CD4-positive, alpha-beta T cell (primary cell): ENCODE measurements at regions of chr3 and their contacts with region 1.

Region 1: GRCh38 chr3:153350420-153350819 is 188.4 kb downstream of the RAP2B start:
- DNase-seq: no peak
- ATAC-seq: no peak
- H3K4me3 ChIP-seq: no peak overlapping the region
- H3K4me3 Mint-ChIP-seq: no peak overlapping the region
- H3K27ac ChIP-seq: no peak overlapping the region
- H3K27ac Mint-ChIP-seq: no peak overlapping the region
- H3K4me1 ChIP-seq: no peaks in the 10 kb centered on the region
- H3K4me1 Mint-ChIP-seq: no peaks in the 10 kb centered on the region
- H3K27me3 ChIP-seq: no peaks in the 10 kb centered on the region
- H3K27me3 Mint-ChIP-seq: no peaks in the 10 kb centered on the region
- CTCF ChIP-seq: no peak

Region 2: GRCh38 chr3:152909180-152909883 is 441.1 kb before region 1 on chr3:
- CTCF ChIA-PET with region 1: no interaction called
- POLR2A ChIA-PET with region 1: no interaction called
- intact Hi-C with region 1: no loop called
- DNase-seq: no peak
- ATAC-seq: no peak
- H3K4me3 ChIP-seq: no peak overlapping the region
- H3K4me3 Mint-ChIP-seq: no peak overlapping the region
- H3K27ac ChIP-seq: no peak overlapping the region
- H3K27ac Mint-ChIP-seq: no peak overlapping the region
- H3K4me1 ChIP-seq: no peaks in the 10 kb centered on the region
- H3K4me1 Mint-ChIP-seq: no peaks in the 10 kb centered on the region
- H3K27me3 ChIP-seq: no peaks in the 10 kb centered on the region
- H3K27me3 Mint-ChIP-seq: no peaks in the 10 kb centered on the region
- CTCF ChIP-seq: no peak

Region 3: DNA sequence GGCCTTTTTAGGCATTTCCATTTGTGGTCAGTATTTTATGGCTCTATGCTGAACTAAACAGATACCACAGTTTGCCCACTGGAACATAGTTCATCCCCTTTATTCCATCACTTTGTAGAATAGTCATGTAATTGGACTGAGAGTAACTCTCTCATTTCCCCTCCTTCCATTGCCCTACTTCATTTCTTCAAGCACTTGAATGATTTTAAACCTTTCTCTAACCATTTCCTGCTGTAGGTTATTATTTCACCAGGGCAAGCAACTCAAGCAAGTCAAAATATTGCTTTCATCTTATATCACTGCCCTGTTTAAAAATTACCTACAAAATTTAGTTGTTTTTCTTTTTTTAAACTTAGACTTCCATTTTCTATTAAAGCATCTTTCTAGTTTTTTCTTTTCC is 11.4 kb before region 1 on chr3:
- CTCF ChIA-PET with region 1: interaction called, 3 read pairs
- POLR2A ChIA-PET with region 1: no interaction called
- intact Hi-C with region 1: loop called in 1 of 2 experiments (anchors 1 kb)
- DNase-seq: no peak
- ATAC-seq: no peak
- H3K4me3 ChIP-seq: no peak overlapping the region
- H3K4me3 Mint-ChIP-seq: no peak overlapping the region
- H3K27ac ChIP-seq: no peak overlapping the region
- H3K27ac Mint-ChIP-seq: no peak overlapping the region
- H3K4me1 ChIP-seq: no peaks in the 10 kb centered on the region
- H3K4me1 Mint-ChIP-seq: no peaks in the 10 kb centered on the region
- H3K27me3 ChIP-seq: no peaks in the 10 kb centered on the region
- H3K27me3 Mint-ChIP-seq: no peaks in the 10 kb centered on the region
- CTCF ChIP-seq: no peak